ENCODE measurements at regions of chr17 and their contacts with region 1.

Region 1: DNA sequence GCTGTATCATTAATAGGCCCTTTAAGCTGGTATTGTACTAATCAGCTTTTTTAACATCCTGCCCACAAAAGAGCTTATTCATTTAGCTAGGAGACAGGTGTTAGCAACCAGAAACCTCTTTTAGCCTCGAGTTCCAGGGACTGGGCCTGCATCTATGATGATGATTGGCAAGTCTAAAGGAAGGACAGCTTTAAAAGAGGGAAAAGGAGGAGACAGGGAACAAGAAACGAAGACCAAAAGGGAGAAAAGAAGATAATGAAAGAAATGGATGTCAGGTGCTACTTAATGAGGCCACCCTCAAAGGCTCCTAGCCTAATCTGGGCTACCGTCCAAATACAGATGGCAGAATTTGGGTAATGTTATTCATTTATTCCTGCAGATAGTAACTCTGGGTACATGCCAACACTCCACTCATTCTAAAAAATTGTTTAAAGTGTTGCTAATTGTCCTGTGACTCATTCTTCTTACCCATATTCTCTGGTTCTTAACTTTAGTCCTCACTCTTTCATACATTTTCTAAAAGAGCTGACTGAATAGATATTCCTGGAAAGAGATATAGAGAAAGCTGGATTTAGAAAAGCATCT is 18.7 kb upstream of the RFFL start:
- DNase-seq: peak in 2 of 3 donors; percentile 41
- H3K4me3 ChIP-seq: no peak overlapping the region
- H3K27ac ChIP-seq: no peak overlapping the region
- H3K4me1 ChIP-seq: peaks cover 3 to 28% (median 10%) of the 10 kb centered on the region in 4 experiments
- H3K27me3 ChIP-seq: no peaks in the 10 kb centered on the region

Region 2: GRCh38 chr17:34974179-34974578 is 108.0 kb before region 1 on chr17:
- CTCF ChIA-PET with region 1: no interaction called
- POLR2A ChIA-PET with region 1: no interaction called
- DNase-seq: no peak
- H3K4me3 ChIP-seq: no peak overlapping the region
- H3K27ac ChIP-seq: no peak overlapping the region
- H3K4me1 ChIP-seq: peaks cover 0 to 1% (median 0%) of the 10 kb centered on the region in 4 experiments
- H3K27me3 ChIP-seq: no peaks in the 10 kb centered on the region

Region 3: DNA sequence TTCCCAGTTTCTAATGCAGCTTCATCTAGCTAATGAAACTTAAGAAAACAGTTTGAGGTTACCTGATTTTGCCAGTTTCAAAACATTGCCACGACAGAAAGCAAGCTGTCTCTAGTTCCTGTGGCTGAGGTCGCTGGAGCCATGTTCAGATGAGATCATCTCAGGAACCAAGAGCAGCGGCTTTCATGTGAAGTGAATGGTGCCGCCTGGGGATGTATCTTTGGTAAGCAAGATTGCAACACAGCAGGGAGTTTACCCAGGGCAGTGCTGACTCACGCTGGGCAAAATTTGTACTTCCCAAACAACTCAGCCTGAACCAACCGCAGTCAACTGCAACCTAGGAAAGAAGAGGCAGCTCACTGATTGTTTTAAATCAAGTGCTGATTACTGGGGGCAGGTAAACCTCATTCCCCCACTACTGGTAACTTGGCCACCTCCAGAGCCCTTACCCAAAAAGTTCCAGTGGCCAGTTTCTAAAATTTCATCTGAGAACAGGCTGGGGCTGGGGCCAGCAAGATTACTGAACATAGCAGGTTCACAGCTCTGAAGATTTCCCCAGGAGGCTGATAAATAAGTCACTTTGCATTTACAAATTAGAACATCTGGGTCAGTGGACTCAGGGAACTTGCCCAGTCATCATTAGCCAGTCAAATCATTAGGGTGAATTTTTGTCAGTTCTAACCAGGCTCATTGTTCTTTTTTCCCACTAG is 18.5 kb before region 1 on chr17 and contains the start of gene RFFL:
- CTCF ChIA-PET with region 1: interaction called, 11 read pairs
- POLR2A ChIA-PET with region 1: interaction called, 6 read pairs
- DNase-seq: peak; percentile 97 to 99 (median 98)
- H3K4me3 ChIP-seq: peak within 1 kb of the TSS in 6 of 7 experiments; percentile 38 to 74 (median 54)
- H3K27ac ChIP-seq: peak within 1 kb of the TSS; percentile 77 to 88
- H3K4me1 ChIP-seq: peaks cover 17 to 53% (median 25%) of the 10 kb centered on the region in 4 experiments
- H3K27me3 ChIP-seq: no peaks in the 10 kb centered on the region

Measured in common myeloid progenitor, CD34-positive (primary cell).